Caco-2 (cell line): ENCODE measurements at regions of chr17 and their contacts with region 1.

Region 1: GRCh38 chr17:1122533-1123392 is 57.0 kb downstream of the ABR start:
- DNase-seq: peak; percentile 81 to 91
- H3K4me3 ChIP-seq: no peak overlapping the region
- H3K4me3 Mint-ChIP-seq: no peak overlapping the region
- H3K27ac Mint-ChIP-seq: no peak overlapping the region
- H3K4me1 ChIP-seq: peaks cover 9% of the 10 kb centered on the region
- H3K4me1 Mint-ChIP-seq: no peaks in the 10 kb centered on the region
- H3K27me3 ChIP-seq: no peaks in the 10 kb centered on the region
- H3K27me3 Mint-ChIP-seq: no peaks in the 10 kb centered on the region
- CTCF ChIP-seq: peak; percentile 83 to 90

Region 2: DNA sequence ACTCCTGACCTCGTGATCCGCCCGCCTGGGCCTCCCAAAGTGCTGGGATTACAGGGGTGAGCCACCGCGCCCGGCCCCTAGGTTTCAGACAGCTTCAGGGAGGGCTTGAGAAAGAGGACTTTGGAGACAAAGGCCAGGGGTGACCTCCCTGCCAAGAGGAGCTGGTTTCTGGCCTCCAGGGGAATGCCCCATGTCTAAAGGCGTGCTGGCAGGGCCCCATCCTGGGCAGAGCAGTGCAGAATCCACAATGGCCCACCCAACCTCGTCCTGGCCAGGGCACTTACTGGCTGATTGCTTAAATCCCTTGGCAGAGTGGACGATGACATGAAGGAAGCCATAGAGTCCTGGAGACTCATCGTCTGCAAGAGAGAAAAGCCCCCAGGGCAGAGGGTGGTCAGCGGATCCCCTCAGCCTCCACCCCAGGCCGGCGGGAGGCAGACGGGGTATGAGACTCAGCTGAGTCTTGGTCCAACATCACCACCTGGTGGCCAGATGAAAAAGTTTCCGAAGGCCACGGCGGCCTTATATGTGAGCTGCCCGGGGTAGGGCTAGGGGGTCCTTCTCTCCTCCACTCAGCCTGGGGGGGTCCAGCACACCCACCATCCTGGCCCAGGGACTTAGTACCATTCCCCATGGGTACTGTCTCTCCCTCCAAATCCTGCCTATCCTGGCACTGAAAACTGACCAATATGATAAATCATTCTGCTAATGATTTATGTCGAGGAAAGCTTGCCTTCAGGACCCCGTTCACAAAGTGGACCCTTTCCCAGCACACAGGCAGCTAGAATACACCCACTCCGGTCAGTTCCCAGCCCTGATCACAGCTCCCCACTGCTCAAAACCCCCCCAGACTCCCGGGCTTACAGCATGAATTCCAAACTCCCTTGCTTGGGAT is 66.8 kb before region 1 on chr17:
- CTCF ChIA-PET with region 1: interaction called, 10 read pairs
- POLR2A ChIA-PET with region 1: no interaction called
- intact Hi-C with region 1: no loop called
- DNase-seq: peak; percentile 61 to 69
- H3K4me3 ChIP-seq: no peak overlapping the region
- H3K4me3 Mint-ChIP-seq: no peak overlapping the region
- H3K27ac Mint-ChIP-seq: no peak overlapping the region
- H3K4me1 ChIP-seq: no peaks in the 10 kb centered on the region
- H3K4me1 Mint-ChIP-seq: no peaks in the 10 kb centered on the region
- H3K27me3 ChIP-seq: no peaks in the 10 kb centered on the region
- H3K27me3 Mint-ChIP-seq: no peaks in the 10 kb centered on the region
- CTCF ChIP-seq: peak; percentile 63 to 86

Region 3: DNA sequence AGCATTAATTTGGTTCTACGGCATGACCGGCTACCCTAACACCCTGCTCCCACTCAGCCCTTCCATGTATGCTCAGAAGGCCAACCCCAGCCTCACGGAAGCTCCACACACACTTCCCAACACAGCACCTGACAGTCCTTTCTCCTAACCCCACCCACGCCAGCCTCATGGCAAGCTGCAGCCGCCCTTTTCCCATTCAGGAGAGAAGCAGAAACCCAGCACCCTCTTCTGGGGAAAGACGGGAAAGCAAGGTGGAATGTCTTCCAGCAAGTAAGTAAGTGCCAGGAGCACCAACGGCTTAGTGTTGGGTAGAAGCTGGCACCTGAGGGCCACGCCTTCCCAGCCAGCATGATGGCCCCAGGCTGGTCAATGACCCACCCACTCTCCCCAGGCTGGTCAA is 24.9 kb after region 1 on chr17:
- CTCF ChIA-PET with region 1: interaction called, 13 read pairs
- POLR2A ChIA-PET with region 1: no interaction called
- intact Hi-C with region 1: loop called (anchors 2 kb)
- DNase-seq: peak; percentile 74 to 77
- H3K4me3 ChIP-seq: no peak overlapping the region
- H3K4me3 Mint-ChIP-seq: no peak overlapping the region
- H3K27ac Mint-ChIP-seq: no peak overlapping the region
- H3K4me1 ChIP-seq: no peaks in the 10 kb centered on the region
- H3K4me1 Mint-ChIP-seq: peaks cover 7% of the 10 kb centered on the region
- H3K27me3 ChIP-seq: no peaks in the 10 kb centered on the region
- H3K27me3 Mint-ChIP-seq: no peaks in the 10 kb centered on the region
- CTCF ChIP-seq: peak; percentile 44 to 68

Region 4: DNA sequence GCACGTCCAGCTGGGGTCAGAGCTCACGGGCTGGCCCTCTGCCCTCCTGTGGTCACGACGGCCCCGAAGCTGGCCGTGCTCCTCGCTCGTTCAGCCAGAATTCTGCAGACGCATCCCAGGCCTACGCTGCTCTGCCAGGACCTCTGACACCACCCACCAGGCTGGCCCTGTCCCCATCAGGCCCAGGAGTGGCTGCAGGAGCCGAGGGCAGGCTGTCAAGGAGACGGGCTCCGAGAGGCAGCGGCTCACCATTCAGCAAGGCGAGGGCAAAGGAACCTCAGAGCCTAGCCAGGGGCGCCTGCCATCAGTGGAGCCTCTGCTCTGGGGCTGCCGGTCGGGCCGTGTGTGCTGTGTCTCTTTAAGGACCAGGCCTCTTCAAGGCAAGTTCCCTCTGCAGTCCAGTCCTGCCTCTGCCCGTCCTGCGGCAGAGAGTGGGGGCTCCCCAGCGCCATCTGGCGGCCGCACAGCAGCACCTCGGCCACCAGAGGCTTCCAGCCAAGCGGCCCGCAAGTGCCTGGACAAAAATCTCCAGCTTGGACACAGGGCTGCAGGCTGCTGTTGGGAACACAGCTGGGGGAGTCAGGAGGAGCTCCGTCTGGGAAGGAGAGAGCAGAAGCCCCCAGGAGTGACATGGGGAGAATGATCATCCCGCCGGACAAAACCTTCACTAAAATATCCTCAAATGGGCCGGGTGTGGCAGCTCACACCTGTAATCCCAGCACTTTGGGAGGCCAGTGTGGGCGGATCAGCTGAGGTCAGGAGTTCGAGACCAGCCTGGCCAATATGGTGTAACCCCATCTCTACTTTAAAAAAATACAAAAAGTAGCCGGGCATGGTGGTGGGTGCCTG is 64.4 kb after region 1 on chr17:
- CTCF ChIA-PET with region 1: interaction called, 48 read pairs
- POLR2A ChIA-PET with region 1: interaction called, 5 read pairs
- intact Hi-C with region 1: loop called (anchors 1 kb)
- DNase-seq: peak; percentile 84 to 91
- H3K4me3 ChIP-seq: no peak overlapping the region
- H3K4me3 Mint-ChIP-seq: no peak overlapping the region
- H3K27ac Mint-ChIP-seq: no peak overlapping the region
- H3K4me1 ChIP-seq: peaks cover 6% of the 10 kb centered on the region; the same call in 1 of the 2 replicates
- H3K4me1 Mint-ChIP-seq: peaks cover 7% of the 10 kb centered on the region
- H3K27me3 ChIP-seq: no peaks in the 10 kb centered on the region
- H3K27me3 Mint-ChIP-seq: no peaks in the 10 kb centered on the region
- CTCF ChIP-seq: peak; percentile 95 to 98

Region 5: DNA sequence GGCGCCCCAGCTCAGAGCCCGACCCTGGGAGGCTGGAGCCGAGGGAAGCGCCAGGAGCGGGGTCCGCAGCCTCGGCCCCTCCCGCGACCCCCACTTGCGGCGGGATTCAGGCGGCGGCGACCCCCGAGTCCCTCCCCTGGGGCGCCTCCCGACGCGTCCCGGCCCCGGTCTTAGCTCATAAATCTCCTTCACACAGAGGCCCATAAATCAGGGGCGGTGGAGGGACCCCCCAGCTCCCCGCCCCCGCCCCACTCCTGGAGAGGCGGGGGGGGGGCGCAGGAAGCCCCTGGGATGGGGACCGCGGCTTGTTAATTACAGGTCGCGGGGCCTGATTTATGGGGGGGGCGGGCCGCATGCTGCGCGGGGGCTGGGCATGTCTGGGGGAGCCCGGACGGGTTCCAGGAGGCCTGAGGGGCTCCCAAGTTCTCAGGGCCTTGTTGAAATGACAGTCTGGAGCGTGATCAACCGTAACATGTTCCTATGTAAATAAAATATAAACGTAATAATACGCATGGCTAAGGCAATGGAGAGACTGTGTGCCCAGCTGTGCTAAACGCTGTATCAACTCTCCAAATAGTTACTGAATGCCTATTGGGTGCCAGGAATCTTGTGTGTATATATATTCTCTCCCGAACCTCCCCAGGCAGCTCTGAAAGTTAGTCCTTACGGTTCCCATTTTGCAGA is 137.5 kb after region 1 on chr17:
- CTCF ChIA-PET with region 1: interaction called, 9 read pairs
- POLR2A ChIA-PET with region 1: no interaction called
- intact Hi-C with region 1: loop called (anchors 2 kb)
- DNase-seq: no peak
- H3K4me3 ChIP-seq: peak overlapping the region; percentile 54
- H3K4me3 Mint-ChIP-seq: peak overlapping the region; percentile 89
- H3K27ac Mint-ChIP-seq: no peak overlapping the region
- H3K4me1 ChIP-seq: no peaks in the 10 kb centered on the region
- H3K4me1 Mint-ChIP-seq: no peaks in the 10 kb centered on the region
- H3K27me3 ChIP-seq: no peaks in the 10 kb centered on the region
- H3K27me3 Mint-ChIP-seq: no peaks in the 10 kb centered on the region
- CTCF ChIP-seq: no peak

Region 6: GRCh38 chr17:1331708-1332107 is 208.9 kb after region 1 on chr17:
- CTCF ChIA-PET with region 1: interaction called, 3 read pairs
- POLR2A ChIA-PET with region 1: no interaction called
- intact Hi-C with region 1: loop called (anchors 10 kb)
- DNase-seq: peak in 1 of 2 experiments; percentile 18
- H3K4me3 ChIP-seq: no peak overlapping the region
- H3K4me3 Mint-ChIP-seq: no peak overlapping the region
- H3K27ac Mint-ChIP-seq: no peak overlapping the region
- H3K4me1 ChIP-seq: no peaks in the 10 kb centered on the region
- H3K4me1 Mint-ChIP-seq: no peaks in the 10 kb centered on the region
- H3K27me3 ChIP-seq: no peaks in the 10 kb centered on the region
- H3K27me3 Mint-ChIP-seq: no peaks in the 10 kb centered on the region
- CTCF ChIP-seq: no peak